Body of pancreas (tissue), 4 donors: ENCODE measurements at regions of chr12 and their contacts with region 1.

Region 1: GRCh38 chr12:68745904-68746571 is at the start of gene SLC35E3:
- DNase-seq: peak; percentile 89 to 92 (median 91)
- ATAC-seq: peak; percentile 99
- H3K4me3 ChIP-seq: peak within 1 kb of the TSS; percentile 48 to 86
- H3K27ac ChIP-seq: peak within 1 kb of the TSS; percentile 57 to 79 (median 66)
- H3K4me1 ChIP-seq: peaks cover 20% of the 10 kb centered on the region
- H3K27me3 ChIP-seq: no peaks in the 10 kb centered on the region
- CTCF ChIP-seq: peak in 3 of 7 experiments; percentile 9 to 11 (median 9)
- POLR2A ChIP-seq: peak; percentile 26 to 80 (median 77)
- total RNA-seq, gene SLC35E3: 2.1 to 2.6 TPM

Region 2: DNA sequence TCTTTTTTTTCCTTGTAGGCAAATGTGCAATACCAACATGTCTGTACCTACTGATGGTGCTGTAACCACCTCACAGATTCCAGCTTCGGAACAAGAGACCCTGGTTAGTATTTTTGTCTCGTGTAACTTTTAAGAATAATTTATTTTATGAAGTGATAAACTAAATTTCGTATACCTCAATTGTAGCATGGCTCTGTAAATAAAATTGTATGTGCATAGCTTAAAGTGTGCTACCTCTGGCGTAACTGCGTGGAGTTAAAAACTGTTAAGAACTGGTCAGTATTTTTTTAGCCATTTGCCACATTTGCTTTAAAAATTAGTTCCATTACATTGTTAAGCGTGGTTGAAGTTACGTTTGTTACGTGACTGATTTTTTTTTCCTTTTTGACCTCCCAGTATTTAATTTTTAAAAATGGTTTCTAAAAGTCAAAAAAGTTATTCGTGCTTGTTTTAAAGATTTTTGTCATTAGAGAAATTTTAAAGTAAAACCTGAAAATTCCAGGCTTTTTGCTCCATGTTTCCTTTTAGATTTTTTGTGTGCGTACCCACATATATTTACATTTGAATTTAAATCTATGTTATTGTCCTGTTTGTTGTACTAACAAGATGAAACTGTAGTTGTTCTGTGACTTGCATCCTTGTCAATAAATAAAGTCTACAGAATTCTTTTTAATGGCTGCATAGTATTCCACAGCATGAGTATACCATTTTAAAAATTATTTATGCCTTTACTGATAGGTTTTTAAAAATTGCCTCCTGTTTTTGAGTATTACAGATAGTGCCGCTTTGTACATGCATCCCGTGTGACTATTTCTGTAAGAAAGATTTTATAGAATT is 63.4 kb after region 1 on chr12:
- intact Hi-C with region 1: loop called (anchors 10 kb)
- DNase-seq: no peak
- ATAC-seq: no peak
- H3K4me3 ChIP-seq: peak overlapping the region; percentile 76 to 83
- H3K27ac ChIP-seq: peak overlapping the region in 3 of 4 donors; percentile 97 to 99 (median 98)
- H3K4me1 ChIP-seq: peaks cover 58% of the 10 kb centered on the region
- H3K27me3 ChIP-seq: no peaks in the 10 kb centered on the region
- CTCF ChIP-seq: no peak
- POLR2A ChIP-seq: no peak